H1 (cell line): ENCODE measurements at regions of chr2 and their contacts with region 1.

Region 1: GRCh38 chr2:159155320-159155719 is 131.2 kb downstream of the WDSUB1 start:
- DNase-seq: peak in 1 of 2 experiments; percentile 31
- H3K4me3 ChIP-seq: no peak overlapping the region
- H3K27ac ChIP-seq: no peak overlapping the region
- H3K4me1 ChIP-seq: peaks cover 0 to 4% (median 1%) of the 10 kb centered on the region in 4 experiments; a peak in 4 of 7 replicates
- H3K27me3 ChIP-seq: no peaks in the 10 kb centered on the region
- CTCF ChIP-seq: no peak
- EP300 ChIP-seq: no peak
- POLR2A ChIP-seq: no peak
- RAD21 ChIP-seq: 0 out of 4 replicates have a peak, but pooled peaks of 1 of the 2 experiments have one; percentile 1

Region 2: GRCh38 chr2:158723917-158724690 is 431.2 kb before region 1 on chr2:
- CTCF ChIA-PET with region 1: no interaction called
- POLR2A ChIA-PET with region 1: no interaction called
- DNase-seq: peak; percentile 10 to 75
- H3K4me3 ChIP-seq: no peak overlapping the region
- H3K27ac ChIP-seq: peak overlapping the region; percentile 29; the same call in 1 of the 2 replicates
- H3K4me1 ChIP-seq: peaks cover 0 to 6% (median 2%) of the 10 kb centered on the region in 4 experiments; a peak in 1 of 7 replicates
- H3K27me3 ChIP-seq: no peaks in the 10 kb centered on the region
- CTCF ChIP-seq: peak; percentile 62 to 96 (median 88)
- EP300 ChIP-seq: no peak
- POLR2A ChIP-seq: no peak
- RAD21 ChIP-seq: peak; percentile 50 to 62; a peak in 3 of 4 replicates

Region 3: GRCh38 chr2:159140070-159140769 is 15.1 kb before region 1 on chr2:
- CTCF ChIA-PET with region 1: interaction called, 43 read pairs
- POLR2A ChIA-PET with region 1: interaction called, 3 read pairs
- DNase-seq: no peak
- H3K4me3 ChIP-seq: no peak overlapping the region
- H3K27ac ChIP-seq: no peak overlapping the region
- H3K4me1 ChIP-seq: no peaks in the 10 kb centered on the region
- H3K27me3 ChIP-seq: no peaks in the 10 kb centered on the region
- CTCF ChIP-seq: no peak
- EP300 ChIP-seq: no peak
- POLR2A ChIP-seq: no peak
- RAD21 ChIP-seq: no peak

Region 4: GRCh38 chr2:159168707-159169106 is 13.4 kb after region 1 on chr2:
- CTCF ChIA-PET with region 1: interaction called, 12 read pairs
- POLR2A ChIA-PET with region 1: no interaction called
- DNase-seq: no peak
- H3K4me3 ChIP-seq: no peak overlapping the region
- H3K27ac ChIP-seq: no peak overlapping the region
- H3K4me1 ChIP-seq: no peaks in the 10 kb centered on the region
- H3K27me3 ChIP-seq: no peaks in the 10 kb centered on the region
- CTCF ChIP-seq: peak in 1 of 3 experiments; percentile 16; a peak in 1 of 4 replicates
- EP300 ChIP-seq: no peak
- POLR2A ChIP-seq: no peak
- RAD21 ChIP-seq: peak; percentile 22 to 34; a peak in 2 of 4 replicates